ENCODE measurements at regions of chr13 and their contacts with region 1.

Region 1: GRCh38 chr13:108895220-108895704 is 265.9 kb downstream of the MYO16 start:
- DNase-seq: peak; percentile 38
- H3K4me3 ChIP-seq: no peak overlapping the region
- H3K27ac ChIP-seq: no peak overlapping the region
- H3K4me1 ChIP-seq: peaks cover 0 to 3% of the 10 kb centered on the region in 2 experiments; a peak in 1 of 4 replicates
- H3K27me3 ChIP-seq: no peaks in the 10 kb centered on the region
- CTCF ChIP-seq: peak; percentile 68
- EP300 ChIP-seq: no peak
- RAD21 ChIP-seq: peak; percentile 81

Region 2: GRCh38 chr13:108328848-108329247 is 566.4 kb before region 1 on chr13:
- CTCF ChIA-PET with region 1: interaction called, 19 read pairs
- POLR2A ChIA-PET with region 1: no interaction called
- DNase-seq: no peak
- H3K4me3 ChIP-seq: no peak overlapping the region
- H3K27ac ChIP-seq: no peak overlapping the region
- H3K4me1 ChIP-seq: no peaks in the 10 kb centered on the region
- H3K27me3 ChIP-seq: no peaks in the 10 kb centered on the region
- CTCF ChIP-seq: no peak
- EP300 ChIP-seq: no peak
- RAD21 ChIP-seq: no peak

Region 3: GRCh38 chr13:108508263-108508662 is 387.0 kb before region 1 on chr13:
- CTCF ChIA-PET with region 1: interaction called, 11 read pairs
- POLR2A ChIA-PET with region 1: no interaction called
- DNase-seq: peak; percentile 39
- H3K4me3 ChIP-seq: no peak overlapping the region
- H3K27ac ChIP-seq: no peak overlapping the region
- H3K4me1 ChIP-seq: no peaks in the 10 kb centered on the region
- H3K27me3 ChIP-seq: no peaks in the 10 kb centered on the region
- CTCF ChIP-seq: peak; percentile 57
- EP300 ChIP-seq: no peak
- RAD21 ChIP-seq: peak; percentile 60

Region 4: DNA sequence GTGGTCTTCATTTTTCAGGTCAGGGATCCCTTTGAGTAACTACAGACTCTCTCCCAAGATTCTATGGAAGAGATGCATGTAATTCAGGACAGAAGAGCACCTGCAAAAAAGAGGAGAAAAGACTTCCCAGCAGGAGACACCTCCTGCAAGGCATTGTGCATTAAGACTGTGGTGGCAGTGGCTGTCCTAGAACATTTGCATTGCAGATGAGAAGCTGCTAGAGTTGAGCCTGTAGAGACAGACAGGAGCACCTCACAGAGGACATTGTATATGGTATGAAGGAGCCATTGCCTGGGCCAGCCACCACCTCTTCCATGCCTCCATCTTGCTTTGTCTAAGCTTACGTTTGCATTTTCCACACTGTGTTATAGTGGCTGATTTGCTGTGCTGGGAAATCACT is 277.0 kb before region 1 on chr13:
- CTCF ChIA-PET with region 1: interaction called, 129 read pairs
- POLR2A ChIA-PET with region 1: no interaction called
- DNase-seq: no peak
- H3K4me3 ChIP-seq: no peak overlapping the region
- H3K27ac ChIP-seq: no peak overlapping the region
- H3K4me1 ChIP-seq: no peaks in the 10 kb centered on the region
- H3K27me3 ChIP-seq: no peaks in the 10 kb centered on the region
- CTCF ChIP-seq: no peak
- EP300 ChIP-seq: no peak
- RAD21 ChIP-seq: no peak

Region 5: DNA sequence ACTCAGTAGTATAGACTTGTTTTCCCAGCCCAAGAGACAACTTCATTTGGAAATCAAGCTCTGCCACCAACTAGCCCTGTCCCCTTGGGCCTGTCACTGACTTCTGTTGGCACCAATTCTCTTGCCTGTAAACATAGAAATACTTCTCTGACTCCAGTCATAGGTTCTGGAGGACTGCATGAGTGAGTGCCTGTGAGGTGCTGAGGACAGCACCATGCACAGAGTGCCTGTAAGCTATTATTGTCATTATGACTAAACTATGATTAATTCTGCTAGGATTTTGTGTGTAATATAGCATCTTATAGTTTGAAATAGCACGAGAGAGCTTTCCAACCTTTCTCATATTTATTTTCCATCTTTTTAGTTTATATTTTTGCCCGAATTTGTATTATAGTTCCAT is 18.0 kb before region 1 on chr13:
- CTCF ChIA-PET with region 1: interaction called, 30 read pairs
- POLR2A ChIA-PET with region 1: no interaction called
- DNase-seq: no peak
- H3K4me3 ChIP-seq: no peak overlapping the region
- H3K27ac ChIP-seq: no peak overlapping the region
- H3K4me1 ChIP-seq: no peaks in the 10 kb centered on the region
- H3K27me3 ChIP-seq: no peaks in the 10 kb centered on the region
- CTCF ChIP-seq: no peak
- EP300 ChIP-seq: no peak
- RAD21 ChIP-seq: no peak